ENCODE measurements at regions of chr7 and their contacts with region 1.

Region 1: GRCh38 chr7:7044501-7045200 is 137.7 kb upstream of the C1GALT1 start:
- DNase-seq: no peak
- H3K4me3 ChIP-seq: no peak overlapping the region
- H3K27ac ChIP-seq: no peak overlapping the region
- H3K4me1 ChIP-seq: no peaks in the 10 kb centered on the region
- CTCF ChIP-seq: no peak

Region 2: DNA sequence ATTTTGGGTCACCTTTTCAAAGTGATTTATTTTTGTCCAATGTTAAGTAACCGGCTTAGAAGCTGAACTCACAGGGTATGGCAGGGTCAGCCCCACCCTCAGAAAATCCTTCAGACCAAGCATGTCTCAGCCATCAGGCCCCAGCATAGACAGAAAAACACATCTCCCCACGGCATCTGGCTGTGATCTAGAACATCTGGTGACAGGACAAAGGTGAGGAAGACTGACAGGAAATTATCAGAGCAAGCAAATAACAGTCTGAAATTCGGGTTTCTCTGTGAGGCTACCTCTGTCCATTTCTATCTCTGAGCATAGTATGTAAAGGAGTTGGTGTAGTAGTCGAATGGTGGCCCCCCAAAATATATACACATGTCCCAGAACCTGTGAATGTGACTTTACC is 39.3 kb before region 1 on chr7:
- CTCF ChIA-PET with region 1: no interaction called
- POLR2A ChIA-PET with region 1: interaction called, 10 read pairs
- intact Hi-C with region 1: no loop called
- DNase-seq: no peak
- H3K4me3 ChIP-seq: no peak overlapping the region
- H3K27ac ChIP-seq: no peak overlapping the region
- H3K4me1 ChIP-seq: no peaks in the 10 kb centered on the region
- CTCF ChIP-seq: no peak

Region 3: DNA sequence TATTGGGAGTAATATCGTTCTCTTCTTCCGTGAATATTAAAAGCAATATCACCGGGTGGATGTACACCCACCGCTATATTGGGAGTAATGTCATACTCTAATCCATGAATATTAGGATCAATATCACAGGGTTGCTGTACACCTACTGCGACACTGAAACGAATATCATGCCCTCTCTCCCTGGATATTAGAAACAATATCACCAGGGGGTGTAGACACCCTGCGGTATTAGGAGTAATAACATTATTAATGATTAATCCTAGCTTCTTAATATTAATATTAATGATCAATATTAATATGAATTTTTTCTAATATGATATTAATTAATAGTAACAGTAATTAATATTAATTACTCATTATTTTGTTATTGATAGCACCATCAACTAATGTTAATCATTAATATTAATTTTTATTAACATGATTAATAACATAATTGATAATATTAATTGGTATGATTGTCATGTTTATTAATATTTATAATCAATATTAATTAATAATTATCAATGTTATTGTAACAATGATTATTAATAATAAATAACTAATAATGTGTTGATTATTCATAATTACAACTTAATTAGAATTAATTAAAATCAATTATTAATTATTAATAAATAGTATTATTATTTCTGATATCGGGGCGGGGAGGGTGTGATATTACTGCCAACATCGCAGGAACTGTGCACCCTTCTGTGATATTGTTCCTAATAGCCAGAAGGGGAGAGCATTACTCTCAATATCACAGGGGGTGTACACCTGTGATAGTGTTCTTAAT is 16.4 kb after region 1 on chr7:
- CTCF ChIA-PET with region 1: no interaction called
- POLR2A ChIA-PET with region 1: no interaction called
- intact Hi-C with region 1: no loop called
- DNase-seq: no peak
- H3K4me3 ChIP-seq: no peak overlapping the region
- H3K27ac ChIP-seq: no peak overlapping the region
- H3K4me1 ChIP-seq: no peaks in the 10 kb centered on the region
- CTCF ChIP-seq: no peak

Region 4: DNA sequence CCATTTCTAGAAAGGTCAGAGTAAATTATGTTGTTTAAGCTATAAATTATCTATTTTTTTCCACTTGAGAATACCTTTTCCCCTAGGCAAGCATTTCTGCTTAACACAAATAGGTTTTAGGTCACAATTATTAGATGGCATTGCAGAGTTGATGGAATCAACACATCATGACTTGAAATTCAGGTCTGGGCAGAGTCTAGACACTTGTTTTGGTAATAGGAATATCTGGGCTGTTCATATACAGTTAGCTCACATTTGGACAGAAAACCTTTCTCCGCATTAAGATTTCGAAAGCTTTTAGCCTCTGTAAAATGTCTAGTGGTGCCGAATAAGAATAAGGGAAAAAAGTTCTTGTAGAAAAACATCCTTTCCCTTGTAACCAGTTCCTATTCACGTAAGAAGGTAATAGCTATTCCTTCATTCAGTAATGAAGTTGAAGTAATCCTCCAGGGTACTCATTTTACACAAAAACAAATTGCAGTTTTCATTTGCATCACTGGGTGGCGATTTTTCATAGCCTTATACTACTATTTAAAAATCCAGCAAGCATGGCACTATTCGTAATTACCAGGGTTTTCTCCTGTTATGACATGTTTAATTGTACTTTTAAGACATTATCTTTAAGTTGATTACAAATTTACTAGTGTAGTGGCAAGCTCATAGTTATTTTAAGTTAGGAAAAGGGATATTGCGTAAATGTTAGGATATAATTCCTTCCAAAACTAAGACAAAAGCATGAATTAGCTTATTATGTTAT is 636.7 kb after region 1 on chr7:
- CTCF ChIA-PET with region 1: no interaction called
- POLR2A ChIA-PET with region 1: no interaction called
- intact Hi-C with region 1: no loop called
- DNase-seq: peak; percentile 75
- H3K4me3 ChIP-seq: no peak overlapping the region
- H3K27ac ChIP-seq: peak overlapping the region; percentile 12
- H3K4me1 ChIP-seq: peaks cover 6% of the 10 kb centered on the region
- CTCF ChIP-seq: peak; percentile 91

Measured in OCI-LY7 (cell line).